A549 (cell line): ENCODE measurements at regions of chr6 and their contacts with region 1.

Region 1: DNA sequence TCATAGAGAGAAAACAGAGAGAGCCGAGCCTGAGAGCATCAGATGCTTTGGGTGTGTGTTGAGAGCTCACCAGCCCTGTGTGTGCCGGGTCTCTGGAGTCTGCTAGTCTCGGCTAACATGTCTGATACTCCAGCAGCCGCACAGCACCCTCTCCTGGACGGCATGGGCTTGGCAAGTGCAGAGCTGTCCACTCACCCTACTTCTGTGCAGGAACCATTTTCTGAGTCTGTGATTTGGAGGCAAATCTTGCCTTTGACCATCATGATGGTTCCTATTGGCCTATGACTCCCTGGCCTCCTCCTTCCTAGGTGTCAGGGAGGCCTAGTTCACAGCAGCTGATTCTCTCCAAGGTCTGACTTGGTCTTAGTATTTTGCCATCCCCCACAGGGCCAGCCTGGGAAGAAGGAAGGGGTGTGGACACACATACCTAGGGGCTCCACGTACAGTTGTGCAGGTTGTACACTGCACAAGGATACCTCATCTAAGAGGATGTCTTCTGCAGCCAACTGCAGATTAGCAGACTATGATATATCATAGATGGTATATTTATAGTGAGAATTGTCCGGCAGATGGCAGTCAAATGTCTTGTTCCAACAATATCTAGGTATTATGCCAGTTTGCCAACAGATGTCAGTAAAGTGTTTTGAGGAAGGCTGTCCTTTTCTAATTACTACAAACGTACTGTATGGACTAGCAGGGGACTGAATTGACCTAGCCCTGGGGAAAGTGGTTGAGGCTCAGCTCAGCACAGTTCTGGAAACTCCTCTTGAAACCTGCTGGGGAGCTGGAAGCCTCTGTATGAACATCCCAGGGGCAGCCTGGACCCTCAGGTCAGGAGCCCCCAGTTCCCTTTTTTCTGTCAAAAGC is 13.0 kb downstream of the FGD2 start:
- DNase-seq: peak; percentile 72 to 80
- ATAC-seq: peak; percentile 93 to 97
- H3K4me3 ChIP-seq: no peak overlapping the region
- H3K27ac ChIP-seq: peak overlapping the region; percentile 48 to 76; a peak in 4 of 6 replicates
- H3K4me1 ChIP-seq: peaks cover 24% of the 10 kb centered on the region
- CTCF ChIP-seq: peak; percentile 91
- EP300 ChIP-seq: no peak
- POLR2A ChIP-seq: no peak
- RAD21 ChIP-seq: peak; percentile 75 to 85

Region 2: GRCh38 chr6:36885461-36886401 is 132.7 kb before region 1 on chr6 and contains the start of gene C6orf89:
- CTCF ChIA-PET with region 1: interaction called, 42 read pairs
- POLR2A ChIA-PET with region 1: interaction called, 7 read pairs
- DNase-seq: peak; percentile 75 to 96
- ATAC-seq: peak; percentile 100
- H3K4me3 ChIP-seq: peak within 1 kb of the TSS; percentile 81
- H3K27ac ChIP-seq: peak within 1 kb of the TSS; percentile 83 to 89
- H3K4me1 ChIP-seq: peaks cover 5% of the 10 kb centered on the region; the same call in 1 of the 3 replicates
- CTCF ChIP-seq: peak; percentile 64
- EP300 ChIP-seq: no peak
- POLR2A ChIP-seq: peak; percentile 63
- RAD21 ChIP-seq: peak; percentile 26 to 55
- polyA plus RNA-seq, gene C6orf89: 27.0 and 32.5 TPM in 2 replicates

Region 3: GRCh38 chr6:36977470-36977941 is 40.9 kb before region 1 on chr6:
- CTCF ChIA-PET with region 1: interaction called, 16 read pairs
- POLR2A ChIA-PET with region 1: no interaction called
- DNase-seq: peak in 1 of 2 experiments; percentile 41
- ATAC-seq: peak in 1 of 2 experiments; percentile 72; a peak in 3 of 6 replicates
- H3K4me3 ChIP-seq: no peak overlapping the region
- H3K27ac ChIP-seq: no peak overlapping the region
- H3K4me1 ChIP-seq: no peaks in the 10 kb centered on the region
- CTCF ChIP-seq: peak; percentile 42
- EP300 ChIP-seq: no peak
- POLR2A ChIP-seq: no peak
- RAD21 ChIP-seq: no peak

Region 4: GRCh38 chr6:37038292-37039198 is 20.1 kb after region 1 on chr6:
- CTCF ChIA-PET with region 1: interaction called, 97 read pairs
- POLR2A ChIA-PET with region 1: no interaction called
- DNase-seq: no peak
- ATAC-seq: no peak
- H3K4me3 ChIP-seq: no peak overlapping the region
- H3K27ac ChIP-seq: peak overlapping the region in 1 of 2 experiments; percentile 11; a peak in 3 of 6 replicates
- H3K4me1 ChIP-seq: peaks cover 13% of the 10 kb centered on the region
- CTCF ChIP-seq: no peak
- EP300 ChIP-seq: no peak
- POLR2A ChIP-seq: no peak
- RAD21 ChIP-seq: no peak

Region 5: DNA sequence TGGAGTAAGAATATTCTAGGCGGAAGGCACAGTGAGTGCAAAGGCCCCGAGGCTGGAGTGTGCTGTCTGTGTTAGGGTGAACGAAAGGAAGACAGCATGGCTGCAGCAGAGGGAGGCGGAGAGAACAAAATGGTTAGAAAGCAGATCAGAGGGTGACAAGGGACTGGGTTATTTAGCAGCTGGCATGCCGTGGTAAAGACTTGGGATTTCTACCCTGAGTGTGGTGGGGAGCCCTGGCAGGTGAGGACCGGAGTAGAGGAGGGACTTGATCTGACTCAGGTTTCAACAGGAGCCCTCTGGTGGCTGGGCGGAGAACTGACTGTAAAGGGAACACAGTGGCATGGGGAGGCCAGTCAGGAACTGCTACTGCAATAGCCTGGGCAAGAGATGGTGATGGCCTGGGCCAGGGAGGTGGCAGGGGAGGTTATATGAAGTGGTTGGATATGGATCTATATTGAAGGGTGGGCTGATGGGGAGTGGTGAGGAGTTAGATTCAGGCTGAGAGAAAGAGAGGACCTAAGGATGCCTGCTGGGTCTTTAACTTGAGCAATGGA is 189.5 kb after region 1 on chr6:
- CTCF ChIA-PET with region 1: interaction called, 546 read pairs
- POLR2A ChIA-PET with region 1: interaction called, 3 read pairs
- DNase-seq: peak; percentile 76 to 83
- ATAC-seq: peak; percentile 84 to 91
- H3K4me3 ChIP-seq: no peak overlapping the region
- H3K27ac ChIP-seq: no peak overlapping the region
- H3K4me1 ChIP-seq: peaks cover 29% of the 10 kb centered on the region
- CTCF ChIP-seq: peak; percentile 63
- EP300 ChIP-seq: no peak
- POLR2A ChIP-seq: no peak
- RAD21 ChIP-seq: peak; percentile 61 to 67